Esophagus muscularis mucosa (tissue), 4 donors: ENCODE measurements at regions of chr12 and their contacts with region 1.

Region 1: DNA sequence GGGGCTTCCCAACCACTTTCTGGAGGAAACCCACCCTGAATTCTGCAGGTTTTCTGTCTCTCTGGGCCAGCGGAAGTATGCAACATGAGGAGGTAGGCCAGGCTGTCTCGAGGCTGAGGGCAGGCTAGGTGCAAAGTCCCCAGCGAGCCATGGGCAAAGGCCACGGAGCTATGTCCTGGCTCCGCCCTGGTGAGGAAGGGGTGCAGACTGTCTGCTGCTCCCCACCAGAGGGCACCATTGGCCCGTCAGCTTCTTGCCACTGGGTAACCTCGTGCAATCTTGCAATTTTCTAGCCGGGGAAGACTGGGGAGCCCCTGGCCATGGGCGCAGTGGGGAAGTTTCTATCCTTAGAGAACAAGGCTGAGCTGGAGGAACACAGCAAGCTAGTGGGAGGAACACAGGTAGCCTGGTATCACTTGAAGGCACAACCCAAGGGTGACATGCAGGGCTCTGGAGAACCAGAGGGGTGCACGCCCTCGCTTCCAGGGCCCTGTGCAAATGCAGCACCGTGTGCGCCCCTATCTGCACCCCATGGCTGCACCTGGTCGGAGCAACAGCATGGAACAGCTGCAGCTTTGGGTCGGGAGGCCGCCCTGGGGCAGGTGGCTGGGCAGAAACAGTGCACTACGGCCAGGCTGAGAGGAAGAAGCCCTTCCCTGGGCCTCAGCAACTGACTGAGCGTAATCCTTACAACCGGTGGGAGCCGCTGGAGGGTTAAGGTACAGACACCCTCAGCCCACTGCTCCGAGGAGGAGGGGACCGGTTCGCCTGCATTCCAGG is 27.6 kb upstream of the RPLP0 start:
- DNase-seq: no peak
- H3K4me3 ChIP-seq: peak overlapping the region; percentile 14 to 39 (median 26)
- H3K27ac ChIP-seq: peak overlapping the region; percentile 86 to 95 (median 91)
- H3K4me1 ChIP-seq: peaks cover 92 to 100% (median 94%) of the 10 kb centered on the region in 4 donors
- H3K27me3 ChIP-seq: no peaks in the 10 kb centered on the region
- CTCF ChIP-seq: peak; percentile 92 to 98 (median 95)
- EP300 ChIP-seq: no peak
- POLR2A ChIP-seq: no peak

Region 2: GRCh38 chr12:120265473-120266179 is 37.1 kb after region 1 on chr12 and contains the start of gene PXN:
- intact Hi-C with region 1: loop called (anchors 1 kb)
- DNase-seq: no peak
- H3K4me3 ChIP-seq: peak within 1 kb of the TSS; percentile 84 to 100 (median 99)
- H3K27ac ChIP-seq: peak within 1 kb of the TSS; percentile 96 to 98 (median 96)
- H3K4me1 ChIP-seq: peaks cover 38 to 51% (median 46%) of the 10 kb centered on the region in 4 donors
- H3K27me3 ChIP-seq: no peaks in the 10 kb centered on the region
- CTCF ChIP-seq: peak; percentile 84 to 93 (median 88)
- EP300 ChIP-seq: no peak
- POLR2A ChIP-seq: peak; percentile 82
- total RNA-seq, gene PXN: 51.9 to 89.4 (median 71.9) TPM

Region 3: GRCh38 chr12:120290541-120291309 is 62.2 kb after region 1 on chr12:
- intact Hi-C with region 1: loop called (anchors 2 kb)
- DNase-seq: no peak
- H3K4me3 ChIP-seq: peak overlapping the region; percentile 59 to 68 (median 62)
- H3K27ac ChIP-seq: peak overlapping the region; percentile 92 to 98 (median 96)
- H3K4me1 ChIP-seq: peaks cover 2 to 18% (median 13%) of the 10 kb centered on the region in 4 donors
- H3K27me3 ChIP-seq: no peaks in the 10 kb centered on the region
- CTCF ChIP-seq: no peak
- EP300 ChIP-seq: no peak
- POLR2A ChIP-seq: no peak

Region 4: GRCh38 chr12:120314220-120314619 is 85.7 kb after region 1 on chr12:
- intact Hi-C with region 1: no loop called
- DNase-seq: no peak
- H3K4me3 ChIP-seq: no peak overlapping the region
- H3K27ac ChIP-seq: no peak overlapping the region
- H3K4me1 ChIP-seq: peaks cover 4 to 12% (median 10%) of the 10 kb centered on the region in 4 donors
- H3K27me3 ChIP-seq: no peaks in the 10 kb centered on the region
- CTCF ChIP-seq: no peak
- EP300 ChIP-seq: no peak
- POLR2A ChIP-seq: no peak

Region 5: DNA sequence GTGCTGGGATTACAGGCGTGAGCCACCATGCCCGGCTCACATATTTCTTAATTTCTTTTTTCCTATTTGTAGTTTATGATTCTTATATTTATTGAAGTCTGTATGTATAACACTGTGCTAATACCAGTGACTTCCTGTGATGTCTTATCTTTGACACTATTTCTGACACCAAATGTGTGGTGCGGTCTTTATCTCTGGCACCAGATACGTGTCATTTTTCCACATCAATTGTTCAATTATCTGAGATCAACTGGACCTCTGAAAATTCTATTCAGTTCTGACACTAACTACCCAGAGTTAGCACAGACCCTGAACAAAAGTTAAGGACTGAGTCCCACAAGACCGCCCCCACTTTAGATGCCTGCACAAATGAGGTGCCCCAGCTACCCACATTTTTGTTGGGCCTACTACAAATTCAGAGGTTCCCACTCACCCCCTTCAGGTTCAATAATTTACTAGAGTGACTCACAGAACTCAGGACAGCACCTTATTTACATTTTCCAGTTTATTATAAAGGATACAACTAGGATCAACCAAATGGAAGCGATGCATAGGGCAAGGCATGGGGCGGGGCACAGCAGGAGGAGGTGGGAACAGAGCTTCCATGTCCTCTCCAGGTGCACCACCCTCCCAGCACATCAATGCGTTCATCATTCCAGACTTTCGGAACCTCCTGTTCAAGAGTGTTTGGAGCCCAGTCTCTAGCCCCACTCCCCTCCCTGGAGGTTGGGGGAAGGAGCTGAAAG is 252.7 kb after region 1 on chr12:
- intact Hi-C with region 1: no loop called
- DNase-seq: no peak
- H3K4me3 ChIP-seq: no peak overlapping the region
- H3K27ac ChIP-seq: no peak overlapping the region
- H3K4me1 ChIP-seq: no peaks in the 10 kb centered on the region
- H3K27me3 ChIP-seq: no peaks in the 10 kb centered on the region
- CTCF ChIP-seq: no peak
- EP300 ChIP-seq: no peak
- POLR2A ChIP-seq: no peak